Activated CD4-positive, alpha-beta memory T cell treated with anti-CD3 and anti-CD28 coated beads, Interleukin-2, amount 10 ng/mL, durations not matched to agents 7 days and 5 days (primary cell): ENCODE measurements at regions of chr3 and their contacts with region 1.

Region 1: GRCh38 chr3:4517643-4518311 is 24.6 kb downstream of the ITPR1 start:
- DNase-seq: no peak
- H3K4me3 Mint-ChIP-seq: no peak overlapping the region
- H3K27ac Mint-ChIP-seq: peak overlapping the region; percentile 13
- H3K4me1 Mint-ChIP-seq: peaks cover 31% of the 10 kb centered on the region
- H3K27me3 Mint-ChIP-seq: no peaks in the 10 kb centered on the region

Region 2: GRCh38 chr3:4504340-4505261 is 13.2 kb before region 1 on chr3:
- CTCF ChIA-PET with region 1: interaction called, 6 read pairs
- POLR2A ChIA-PET with region 1: interaction called, 10 read pairs
- DNase-seq: peak; percentile 31
- H3K4me3 Mint-ChIP-seq: peak overlapping the region; percentile 78
- H3K27ac Mint-ChIP-seq: peak overlapping the region; percentile 90
- H3K4me1 Mint-ChIP-seq: peaks cover 50% of the 10 kb centered on the region
- H3K27me3 Mint-ChIP-seq: no peaks in the 10 kb centered on the region

Region 3: DNA sequence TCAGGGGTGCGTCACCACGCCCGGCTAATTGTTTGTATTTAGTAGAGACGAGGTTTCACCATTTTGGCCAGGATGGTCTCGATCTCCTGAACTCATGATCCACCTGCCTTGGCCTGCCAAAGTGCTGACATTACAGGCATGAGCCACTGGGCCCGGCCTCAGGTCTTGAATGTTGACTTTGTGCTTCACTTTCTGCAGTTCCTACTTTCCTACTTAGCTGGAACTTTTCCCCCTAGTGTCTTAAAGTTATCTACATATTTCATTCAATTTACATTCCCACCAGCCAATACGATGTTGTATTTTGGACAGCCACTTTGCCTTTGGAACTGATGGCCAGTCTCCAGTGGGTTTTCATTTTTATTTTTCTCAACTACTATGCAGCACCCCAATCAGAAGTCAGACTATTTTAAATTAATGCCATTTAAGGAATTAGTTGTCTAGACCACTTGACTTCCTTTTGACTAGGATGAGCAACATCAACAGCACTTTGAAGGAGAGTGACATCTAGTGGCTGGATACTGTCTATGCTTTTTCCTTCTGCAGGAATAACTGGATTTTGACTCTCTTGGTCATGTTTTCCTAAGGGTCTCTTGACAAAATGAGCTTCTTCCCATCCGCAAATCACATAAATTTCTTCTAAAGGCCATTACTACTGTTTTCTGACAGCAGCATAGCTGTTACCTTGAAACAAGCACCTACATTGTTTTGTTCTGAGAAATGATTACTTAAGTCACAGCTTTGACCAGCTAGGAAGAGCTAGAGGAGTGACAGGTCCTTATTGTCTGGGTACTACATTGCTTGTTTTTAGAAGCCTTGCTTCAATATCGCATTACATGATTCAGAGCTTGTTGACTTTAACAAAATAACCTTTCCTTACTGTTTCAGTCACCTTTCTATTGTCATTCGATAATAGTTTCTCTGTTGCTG is 115.6 kb after region 1 on chr3:
- CTCF ChIA-PET with region 1: interaction called, 41 read pairs
- POLR2A ChIA-PET with region 1: no interaction called
- DNase-seq: no peak
- H3K4me3 Mint-ChIP-seq: no peak overlapping the region
- H3K27ac Mint-ChIP-seq: no peak overlapping the region
- H3K4me1 Mint-ChIP-seq: peaks cover 5% of the 10 kb centered on the region
- H3K27me3 Mint-ChIP-seq: no peaks in the 10 kb centered on the region

Region 4: DNA sequence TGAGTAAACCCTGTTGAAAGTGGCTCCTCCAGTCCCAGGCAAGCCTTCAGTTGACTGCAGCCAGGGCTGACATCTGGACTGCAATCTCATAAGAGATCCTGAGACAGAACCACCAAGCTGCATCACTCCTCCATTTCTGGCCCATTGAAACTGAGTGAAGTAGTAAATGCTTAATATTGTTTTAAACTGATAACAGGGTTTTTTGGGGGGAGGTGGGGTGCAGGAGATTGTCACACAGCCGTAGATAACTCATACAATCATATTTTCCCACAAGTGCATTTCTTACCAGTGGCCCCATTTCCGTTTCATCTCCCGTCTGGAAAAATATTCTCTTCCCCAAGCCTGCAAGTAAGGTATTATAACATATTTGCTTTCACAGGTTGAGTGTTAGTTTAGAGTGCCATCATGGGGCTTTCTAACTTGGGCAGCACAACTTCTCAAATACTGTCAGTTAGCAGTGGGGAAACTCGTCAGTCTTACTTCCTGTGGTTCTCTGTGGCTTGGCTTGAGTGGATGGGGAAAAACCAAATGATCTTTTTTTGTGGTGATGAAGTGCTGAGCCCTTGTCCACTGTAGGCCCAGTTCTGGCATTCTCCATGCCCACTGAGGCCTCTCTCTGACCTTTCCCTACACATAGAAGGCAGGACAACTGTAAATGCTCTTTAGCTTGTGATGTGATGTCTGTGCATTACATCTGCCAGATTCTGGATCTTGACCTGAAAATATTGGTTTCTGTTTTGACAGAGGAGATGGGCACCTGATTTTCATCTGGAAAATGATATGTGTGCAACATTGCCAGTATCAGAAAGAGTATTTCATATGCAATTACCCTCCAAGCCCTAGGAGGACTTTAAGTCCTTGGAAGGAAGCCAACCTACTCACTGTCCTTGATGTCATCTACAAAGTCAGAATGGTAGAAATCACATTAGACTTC is 371.4 kb after region 1 on chr3:
- CTCF ChIA-PET with region 1: no interaction called
- POLR2A ChIA-PET with region 1: no interaction called
- DNase-seq: peak; percentile 52
- H3K4me3 Mint-ChIP-seq: peak overlapping the region; percentile 1
- H3K27ac Mint-ChIP-seq: peak overlapping the region; percentile 80
- H3K4me1 Mint-ChIP-seq: peaks cover 32% of the 10 kb centered on the region
- H3K27me3 Mint-ChIP-seq: peaks cover 3% of the 10 kb centered on the region